ENCODE measurements at regions of chr4 and their contacts with region 1.

Region 1: GRCh38 chr4:76213415-76214176 is at the start of gene SCARB2:
- DNase-seq: peak; percentile 75 to 98 (median 86)

Region 2: DNA sequence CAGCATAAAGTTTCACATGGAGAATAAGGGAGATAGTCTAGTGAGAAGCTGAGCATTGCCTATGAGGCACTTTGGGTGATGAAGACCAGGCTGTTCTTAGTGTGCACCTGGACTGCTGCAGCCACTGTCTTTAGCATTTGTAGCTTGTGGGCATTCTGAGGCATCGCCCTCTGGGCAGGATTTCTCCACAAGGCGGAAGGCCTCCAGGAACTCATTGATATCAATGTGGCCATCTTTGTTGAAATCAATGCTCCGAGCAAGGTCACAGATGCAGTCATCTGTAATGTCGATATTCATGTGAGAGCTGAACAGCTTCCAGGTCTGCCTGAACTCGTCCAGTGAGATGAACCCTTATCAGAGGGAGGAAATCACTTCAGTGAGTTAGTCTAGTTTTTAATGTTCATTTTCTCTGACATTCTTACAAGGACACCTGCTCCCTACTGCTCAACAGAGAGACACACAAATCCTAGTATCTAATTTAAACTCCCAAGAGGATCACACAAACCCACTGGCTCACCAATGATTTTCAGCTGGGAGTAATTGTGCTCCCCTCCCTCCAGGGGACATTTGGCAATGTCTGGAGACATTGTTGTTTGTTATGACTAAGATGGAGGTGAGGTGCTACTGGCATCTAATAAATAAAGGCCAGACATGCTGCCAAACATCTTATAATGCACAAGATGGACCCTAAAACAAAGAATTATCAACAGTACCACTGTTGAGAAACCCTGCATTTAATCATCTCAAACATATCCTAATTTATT is 352.8 kb before region 1 on chr4:
- intact Hi-C with region 1: no loop called
- DNase-seq: no peak

Region 3: DNA sequence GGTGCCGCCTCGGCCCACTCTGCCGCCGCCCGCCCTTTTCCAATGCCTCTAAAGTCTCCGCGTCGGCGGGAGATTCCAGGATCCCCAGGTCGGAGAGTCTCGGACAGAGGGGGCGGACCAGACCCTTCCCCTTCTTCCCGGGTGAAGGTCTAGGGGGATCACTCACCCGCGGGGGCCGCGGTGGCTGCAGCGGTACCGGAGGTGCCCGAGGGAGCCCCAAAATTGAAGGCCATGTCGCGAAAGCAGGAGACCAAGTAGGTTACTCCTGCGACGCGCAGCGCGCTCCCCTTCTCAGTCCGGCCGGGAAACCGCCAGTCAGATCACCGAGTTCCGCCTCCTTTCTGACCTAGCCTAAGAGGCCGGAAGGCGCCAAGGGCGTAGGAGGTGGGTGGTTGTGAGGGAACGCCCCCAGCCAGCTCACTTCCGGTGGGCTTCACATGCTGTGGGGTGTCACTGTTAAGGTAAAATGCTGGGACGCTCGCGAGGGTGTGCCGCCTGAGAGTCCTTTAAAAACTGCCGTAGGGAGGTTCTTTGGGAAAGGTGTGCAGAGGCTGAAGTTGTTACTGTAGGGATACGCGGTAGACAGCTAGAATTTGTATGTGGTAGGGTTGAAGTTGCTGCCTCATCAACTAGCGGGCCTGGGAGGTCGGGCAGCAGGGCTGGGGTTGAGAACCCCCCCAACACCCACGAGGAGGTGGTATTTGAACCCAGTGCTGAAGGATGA is 65.3 kb before region 1 on chr4 and contains the start of gene NUP54:
- intact Hi-C with region 1: loop called (anchors 5 kb)
- DNase-seq: peak; percentile 92 to 99 (median 95)

Region 4: DNA sequence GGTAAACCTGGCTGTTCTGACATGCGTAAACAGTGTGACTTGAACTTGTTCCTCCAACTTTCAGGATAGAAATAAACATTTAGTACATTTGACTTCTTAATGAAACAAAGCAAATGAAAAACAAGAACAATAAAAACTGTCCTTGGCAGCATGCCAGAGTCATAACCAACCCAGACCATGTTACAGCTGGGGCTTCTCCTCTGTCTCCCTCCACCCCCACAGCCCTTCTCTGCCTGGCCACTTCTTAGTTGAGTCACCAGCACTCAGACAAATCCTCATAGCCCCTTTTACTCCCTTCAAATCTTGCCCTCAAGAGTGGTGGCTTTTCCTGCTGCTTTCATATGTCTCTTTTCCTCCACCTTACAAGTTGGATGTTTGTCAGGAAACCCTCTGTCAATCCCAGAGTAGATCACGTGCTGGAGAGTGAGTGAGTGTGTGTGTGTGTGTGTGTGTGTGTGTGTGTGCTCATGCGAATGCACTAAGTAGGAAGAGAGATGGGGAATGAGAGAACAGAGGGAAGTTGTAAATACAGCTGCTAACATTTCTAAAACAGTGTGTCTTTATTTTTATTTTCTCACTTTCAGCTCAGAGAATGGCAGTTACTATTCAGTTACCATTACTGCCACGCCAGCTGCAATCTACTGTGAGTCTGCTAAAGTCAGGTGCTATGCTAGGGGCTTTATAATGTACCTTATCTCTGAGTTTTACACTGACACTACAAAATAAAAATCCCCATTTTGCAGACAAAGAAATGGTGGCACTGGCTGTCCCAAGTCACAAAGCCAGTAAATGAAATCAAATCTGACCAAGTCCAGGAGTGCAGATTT is 15.0 kb before region 1 on chr4:
- intact Hi-C with region 1: loop called (anchors 2 kb)
- DNase-seq: peak in 4 of 10 donors; percentile 41 to 85 (median 46)

Region 5: GRCh38 chr4:76305971-76306881 is 92.6 kb after region 1 on chr4 and contains the start of gene STBD1:
- intact Hi-C with region 1: no loop called
- DNase-seq: peak in 9 of 10 donors; percentile 25 to 89 (median 53)

Region 6: DNA sequence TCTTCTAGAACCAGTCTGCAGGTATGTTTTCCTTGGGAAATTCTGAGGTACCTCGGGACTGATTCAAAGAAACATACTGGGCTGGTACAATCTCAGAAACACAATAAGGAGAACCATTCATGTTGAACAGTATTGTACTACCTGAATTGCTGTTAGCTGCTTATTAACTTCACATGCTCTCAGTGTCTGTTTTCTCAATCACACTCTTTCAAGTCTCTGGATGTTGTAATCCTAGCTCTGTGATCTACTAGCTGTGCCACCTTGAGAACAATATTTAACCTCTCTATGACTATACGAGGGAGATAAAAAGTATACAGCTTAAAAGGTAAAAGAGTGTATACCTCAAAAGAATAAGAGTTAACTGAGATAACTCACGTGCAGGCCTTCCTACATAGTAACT is 197.0 kb after region 1 on chr4:
- intact Hi-C with region 1: no loop called
- DNase-seq: no peak

Measured in posterior cingulate gyrus (tissue), 11 donors.